Heart right ventricle (tissue), 16 donors: ENCODE measurements at regions of chr16 and their contacts with region 1.

Region 1: DNA sequence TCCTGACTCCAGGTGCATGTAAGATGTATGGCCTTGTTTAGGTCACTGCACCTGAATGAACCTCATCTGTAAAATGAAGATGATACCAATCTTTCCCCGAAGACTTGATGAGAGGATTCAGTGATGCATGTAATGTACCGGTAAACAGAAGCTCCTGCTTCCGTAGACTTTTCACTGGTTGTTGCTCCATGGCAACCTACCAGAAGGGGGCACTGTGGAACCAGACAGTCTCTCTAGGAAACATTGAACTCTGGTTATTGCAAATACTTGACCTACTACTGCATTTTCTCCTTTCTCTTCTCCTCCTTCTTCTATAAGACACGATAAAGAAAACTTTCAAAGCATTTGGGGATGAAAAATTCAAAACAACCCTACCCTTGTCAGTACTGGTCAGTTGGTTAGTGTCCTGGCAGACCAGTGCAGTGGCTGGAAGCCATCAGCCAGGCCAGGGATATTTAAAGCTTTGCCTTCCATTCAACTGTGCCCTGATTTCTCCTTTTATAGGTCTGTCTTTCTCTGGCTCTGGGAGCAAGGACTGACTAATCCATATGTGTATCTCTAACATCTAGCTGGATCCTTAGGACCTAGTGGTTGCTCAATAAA is 667.4 kb upstream of the SALL1 start:
- DNase-seq: peak in 1 of 2 donors; percentile 7
- ATAC-seq: no peak
- H3K4me3 ChIP-seq: no peak overlapping the region
- H3K27ac ChIP-seq: no peak overlapping the region
- H3K4me1 ChIP-seq: no peaks in the 10 kb centered on the region
- H3K27me3 ChIP-seq: no peaks in the 10 kb centered on the region
- CTCF ChIP-seq: peak in 8 of 9 donors; percentile 22 to 60 (median 52)

Region 2: DNA sequence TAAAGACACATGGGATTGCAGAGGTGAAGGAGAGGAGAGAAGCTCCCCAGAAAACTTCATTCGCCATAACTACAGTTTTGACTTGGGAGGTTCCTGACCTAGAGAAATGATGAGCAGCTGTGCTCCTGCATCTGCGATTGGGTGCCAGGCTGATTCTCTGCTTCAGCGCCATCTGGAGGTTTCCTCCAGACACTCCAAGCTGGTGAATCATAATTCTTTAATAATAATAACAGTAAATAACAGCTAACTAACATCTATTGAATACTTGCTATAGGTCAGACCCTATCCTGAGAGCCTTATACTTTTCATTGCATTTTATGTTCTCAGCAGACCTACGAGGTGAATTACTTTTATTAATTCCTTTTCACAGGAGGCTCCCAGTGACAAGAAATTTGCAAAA is 152.7 kb after region 1 on chr16:
- intact Hi-C with region 1: loop called in 1 of 10 experiments (anchors 10 kb)
- DNase-seq: no peak
- ATAC-seq: no peak
- H3K4me3 ChIP-seq: no peak overlapping the region
- H3K27ac ChIP-seq: no peak overlapping the region
- H3K4me1 ChIP-seq: no peaks in the 10 kb centered on the region
- H3K27me3 ChIP-seq: peaks cover 0 to 4% (median 0%) of the 10 kb centered on the region in 7 donors
- CTCF ChIP-seq: peak in 1 of 9 donors; percentile 10

Region 3: DNA sequence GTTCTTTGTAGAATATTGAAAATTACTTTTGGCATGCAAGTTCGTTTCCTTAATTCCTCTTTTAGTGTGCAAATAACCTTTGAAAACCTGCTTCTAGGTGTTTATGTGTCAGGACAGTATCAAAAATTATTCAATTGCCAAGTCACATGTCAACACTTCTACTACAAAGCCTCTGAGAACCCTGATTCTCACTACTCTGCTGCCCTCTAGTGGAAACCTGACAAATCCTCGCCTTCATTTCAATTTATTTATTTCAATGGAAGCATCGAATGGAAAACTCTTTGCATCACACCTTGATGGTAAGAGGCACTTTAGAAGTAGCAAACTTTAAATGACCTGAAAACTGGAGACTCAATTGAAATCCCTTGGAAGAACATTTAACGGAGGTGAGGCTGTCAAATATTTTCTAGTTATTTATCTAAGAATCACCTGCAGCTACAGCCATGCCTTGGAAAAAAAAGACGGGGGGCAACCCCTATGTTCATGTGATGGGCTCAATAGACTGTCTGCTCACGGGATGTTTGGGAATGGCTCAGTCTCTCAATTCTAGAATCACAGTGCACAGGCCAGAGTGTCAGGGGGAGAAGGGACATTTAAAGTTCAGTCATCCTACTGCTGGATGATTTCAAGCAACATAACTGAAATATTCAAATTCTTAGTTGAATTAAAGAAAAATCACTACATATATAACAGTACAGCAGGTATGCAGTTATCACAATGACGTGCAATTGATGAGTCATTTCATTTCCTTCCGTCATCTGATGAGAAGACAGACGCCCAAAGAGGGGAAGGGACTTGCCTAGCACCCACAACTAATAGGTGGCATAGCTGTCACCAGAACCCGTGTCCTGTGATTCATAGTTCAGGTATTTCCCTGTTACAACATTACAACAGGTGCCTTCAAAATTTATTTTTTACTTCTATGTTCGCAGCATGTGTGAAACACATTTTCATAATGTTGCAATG is 164.6 kb after region 1 on chr16:
- intact Hi-C with region 1: loop called in 7 of 10 experiments (anchors 5 to 10 kb)
- DNase-seq: peak in 1 of 2 donors; percentile 35
- ATAC-seq: peak in 2 of 8 donors; percentile 37 to 64
- H3K4me3 ChIP-seq: no peak overlapping the region
- H3K27ac ChIP-seq: no peak overlapping the region
- H3K4me1 ChIP-seq: no peaks in the 10 kb centered on the region
- H3K27me3 ChIP-seq: peaks cover 0 to 16% (median 3%) of the 10 kb centered on the region in 7 donors
- CTCF ChIP-seq: peak; percentile 49 to 77 (median 69)